ENCODE measurements at regions of chr1 and their contacts with region 1.

Region 1: GRCh38 chr1:219385786-219386427 is 212.2 kb downstream of the LYPLAL1 start:
- DNase-seq: peak; percentile 87
- H3K4me3 Mint-ChIP-seq: no peak overlapping the region
- H3K27ac Mint-ChIP-seq: no peak overlapping the region
- H3K4me1 Mint-ChIP-seq: no peaks in the 10 kb centered on the region
- H3K27me3 Mint-ChIP-seq: peaks cover 63% of the 10 kb centered on the region
- CTCF ChIP-seq: peak; percentile 96

Region 2: DNA sequence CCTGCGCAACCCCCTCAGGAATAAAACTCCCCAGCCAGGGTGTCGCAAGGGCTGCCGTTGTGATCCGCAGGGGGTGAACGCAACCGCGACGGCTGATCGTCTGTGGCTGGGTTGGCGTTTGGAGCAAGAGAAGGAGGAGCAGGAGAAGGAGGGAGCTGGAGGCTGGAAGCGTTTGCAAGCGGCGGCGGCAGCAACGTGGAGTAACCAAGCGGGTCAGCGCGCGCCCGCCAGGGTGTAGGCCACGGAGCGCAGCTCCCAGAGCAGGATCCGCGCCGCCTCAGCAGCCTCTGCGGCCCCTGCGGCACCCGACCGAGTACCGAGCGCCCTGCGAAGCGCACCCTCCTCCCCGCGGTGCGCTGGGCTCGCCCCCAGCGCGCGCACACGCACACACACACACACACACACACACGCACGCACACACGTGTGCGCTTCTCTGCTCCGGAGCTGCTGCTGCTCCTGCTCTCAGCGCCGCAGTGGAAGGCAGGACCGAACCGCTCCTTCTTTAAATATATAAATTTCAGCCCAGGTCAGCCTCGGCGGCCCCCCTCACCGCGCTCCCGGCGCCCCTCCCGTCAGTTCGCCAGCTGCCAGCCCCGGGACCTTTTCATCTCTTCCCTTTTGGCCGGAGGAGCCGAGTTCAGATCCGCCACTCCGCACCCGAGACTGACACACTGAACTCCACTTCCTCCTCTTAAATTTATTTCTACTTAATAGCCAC is 1040.1 kb before region 1 on chr1:
- CTCF ChIA-PET with region 1: interaction called, 13 read pairs
- POLR2A ChIA-PET with region 1: interaction called, 3 read pairs
- intact Hi-C with region 1: no loop called
- DNase-seq: peak; percentile 81
- H3K4me3 Mint-ChIP-seq: no peak overlapping the region
- H3K27ac Mint-ChIP-seq: no peak overlapping the region
- H3K4me1 Mint-ChIP-seq: peaks cover 41% of the 10 kb centered on the region
- H3K27me3 Mint-ChIP-seq: no peaks in the 10 kb centered on the region
- CTCF ChIP-seq: no peak

Region 3: DNA sequence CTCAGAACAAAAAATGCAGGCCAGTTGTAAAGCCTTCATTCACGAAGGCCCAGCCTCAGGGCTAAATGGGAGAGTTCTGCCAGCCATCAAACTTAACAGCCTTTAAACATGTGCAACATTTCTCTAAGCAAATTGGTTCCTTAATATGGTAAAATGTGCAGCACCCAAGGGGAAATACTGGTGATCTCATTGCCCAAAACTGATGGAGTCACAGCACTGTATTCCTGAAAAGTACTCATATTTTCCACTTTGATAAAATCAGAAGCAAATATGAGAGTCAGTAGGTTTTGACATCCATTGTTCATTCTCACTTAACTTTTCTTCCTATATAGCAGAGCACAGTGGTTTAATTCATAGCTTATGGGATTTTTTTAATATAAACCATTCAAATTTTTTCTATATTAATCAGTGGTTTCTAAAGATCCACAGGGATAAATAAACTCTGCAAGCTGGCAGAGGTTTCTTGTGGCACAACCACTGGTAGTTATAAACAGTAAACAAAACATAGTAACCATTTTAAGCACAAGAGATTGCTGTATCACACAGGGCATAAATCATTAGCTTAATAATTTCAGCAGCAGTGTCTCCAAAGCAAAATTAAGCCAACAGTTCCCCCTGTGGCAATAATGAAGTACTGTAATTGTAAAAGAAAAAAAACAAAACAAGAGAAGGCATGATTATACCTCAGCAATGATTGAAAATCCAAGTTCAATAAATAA is 319.1 kb before region 1 on chr1:
- CTCF ChIA-PET with region 1: interaction called, 12 read pairs
- POLR2A ChIA-PET with region 1: no interaction called
- intact Hi-C with region 1: loop called (anchors 1 kb)
- DNase-seq: peak; percentile 65
- H3K4me3 Mint-ChIP-seq: no peak overlapping the region
- H3K27ac Mint-ChIP-seq: no peak overlapping the region
- H3K4me1 Mint-ChIP-seq: peaks cover 6% of the 10 kb centered on the region
- H3K27me3 Mint-ChIP-seq: no peaks in the 10 kb centered on the region
- CTCF ChIP-seq: peak; percentile 90

Region 4: DNA sequence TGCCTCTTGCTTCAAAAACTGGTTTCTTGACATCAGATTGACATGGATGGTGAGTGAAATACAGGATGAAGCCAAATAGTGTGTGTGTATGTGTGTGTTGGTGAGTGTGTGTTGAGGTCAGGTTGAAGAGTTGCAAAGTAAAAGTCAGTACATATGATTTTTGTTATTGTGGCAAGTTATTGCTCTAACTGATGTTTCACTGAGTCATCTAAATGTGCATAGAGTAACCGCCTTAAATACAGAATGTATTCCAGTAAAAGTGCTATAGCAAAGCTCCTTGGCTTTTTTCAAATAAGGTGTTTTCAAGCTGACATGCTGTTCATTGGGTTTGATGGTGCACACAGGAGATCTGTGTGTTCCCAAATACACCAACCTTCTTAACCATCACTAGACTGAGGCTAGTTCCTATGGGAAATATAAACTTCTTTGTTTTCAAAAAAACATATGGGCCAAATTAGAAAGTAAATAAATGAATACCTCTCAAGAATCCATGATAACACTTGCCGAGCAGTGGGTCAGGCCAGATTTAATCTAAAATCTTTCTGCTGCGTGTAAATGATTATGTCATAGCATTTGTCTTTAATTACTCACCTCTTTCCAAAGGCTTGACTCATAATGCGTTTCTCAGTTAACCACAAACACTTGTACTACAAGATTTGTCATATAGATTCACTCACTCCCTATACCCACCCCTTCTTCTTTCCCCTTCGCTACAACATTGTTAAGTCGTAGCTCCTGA is 61.1 kb before region 1 on chr1:
- CTCF ChIA-PET with region 1: interaction called, 19 read pairs
- POLR2A ChIA-PET with region 1: interaction called, 3 read pairs
- intact Hi-C with region 1: no loop called
- DNase-seq: peak; percentile 97
- H3K4me3 Mint-ChIP-seq: no peak overlapping the region
- H3K27ac Mint-ChIP-seq: no peak overlapping the region
- H3K4me1 Mint-ChIP-seq: peaks cover 16% of the 10 kb centered on the region
- H3K27me3 Mint-ChIP-seq: peaks cover 100% of the 10 kb centered on the region
- CTCF ChIP-seq: no peak

Region 5: GRCh38 chr1:219373616-219373935 is 12.3 kb before region 1 on chr1:
- CTCF ChIA-PET with region 1: interaction called, 47 read pairs
- POLR2A ChIA-PET with region 1: interaction called, 3 read pairs
- intact Hi-C with region 1: no loop called
- DNase-seq: no peak
- H3K4me3 Mint-ChIP-seq: no peak overlapping the region
- H3K27ac Mint-ChIP-seq: no peak overlapping the region
- H3K4me1 Mint-ChIP-seq: no peaks in the 10 kb centered on the region
- H3K27me3 Mint-ChIP-seq: peaks cover 96% of the 10 kb centered on the region
- CTCF ChIP-seq: no peak

Region 6: GRCh38 chr1:219812491-219813203 is 426.7 kb after region 1 on chr1:
- CTCF ChIA-PET with region 1: interaction called, 7 read pairs
- POLR2A ChIA-PET with region 1: no interaction called
- intact Hi-C with region 1: loop called (anchors 1 kb)
- DNase-seq: peak; percentile 85
- H3K4me3 Mint-ChIP-seq: no peak overlapping the region
- H3K27ac Mint-ChIP-seq: no peak overlapping the region
- H3K4me1 Mint-ChIP-seq: no peaks in the 10 kb centered on the region
- H3K27me3 Mint-ChIP-seq: no peaks in the 10 kb centered on the region
- CTCF ChIP-seq: peak; percentile 99

Measured in MCF 10A (cell line).